ENCODE measurements at regions of chr6 and their contacts with region 1.

Region 1: DNA sequence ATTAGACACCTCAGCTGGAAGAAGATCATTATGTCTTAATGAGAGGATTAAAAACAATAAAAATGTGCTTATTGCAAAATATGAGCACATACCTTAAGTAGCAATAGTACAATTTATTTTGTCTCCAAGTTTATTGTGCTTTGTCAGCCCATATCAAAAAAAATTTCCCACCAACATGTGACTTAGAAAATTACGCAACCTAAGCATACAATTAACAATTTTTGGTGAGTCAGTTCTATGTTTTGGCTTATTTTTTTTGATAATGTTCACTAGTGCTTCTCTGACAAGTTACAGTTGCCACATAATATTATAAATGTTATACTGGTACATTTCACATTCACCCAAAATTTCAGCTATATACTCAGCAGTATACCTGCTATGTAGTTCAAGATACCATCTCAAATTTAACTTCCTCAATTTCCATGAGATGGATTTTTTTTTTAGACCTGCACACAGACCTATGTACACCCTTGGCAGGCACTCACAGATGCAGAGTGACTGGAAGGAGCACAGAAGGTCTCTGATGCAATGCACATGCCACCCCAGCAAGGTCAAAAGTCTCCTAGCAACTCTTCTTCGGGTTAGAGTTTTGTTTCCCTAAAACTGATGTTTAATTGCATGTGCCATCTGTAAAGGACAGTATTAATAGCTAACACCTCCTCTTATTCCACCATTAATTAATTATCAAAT is 112.4 kb downstream of the PRKN start:
- DNase-seq: no peak
- ATAC-seq: no peak
- H3K4me3 ChIP-seq: no peak overlapping the region
- H3K27ac ChIP-seq: no peak overlapping the region
- H3K4me1 ChIP-seq: no peaks in the 10 kb centered on the region
- H3K27me3 ChIP-seq: no peaks in the 10 kb centered on the region
- CTCF ChIP-seq: no peak
- POLR2A ChIP-seq: no peak
- RAD21 ChIP-seq: no peak

Region 2: DNA sequence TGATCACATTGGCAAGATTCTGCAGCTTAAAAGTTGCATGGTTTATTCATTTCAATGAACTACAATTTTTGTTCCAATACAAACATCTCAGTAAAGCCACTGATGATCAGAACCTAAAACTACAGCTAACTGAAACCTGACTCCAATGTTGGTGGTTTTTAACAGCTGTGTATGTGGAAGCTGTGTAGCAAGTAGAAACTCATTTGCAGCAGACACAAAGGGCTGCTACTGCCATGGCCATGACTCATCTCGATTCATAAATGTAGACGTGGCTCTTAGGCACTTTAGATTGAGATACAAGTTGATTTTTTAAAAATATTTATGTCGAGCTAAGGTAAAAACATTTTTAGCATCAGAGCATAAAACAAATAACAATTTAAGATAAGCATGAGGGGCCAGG is 1643.0 kb before region 1 on chr6:
- CTCF ChIA-PET with region 1: interaction called, 10 read pairs
- POLR2A ChIA-PET with region 1: no interaction called
- dilution Hi-C with region 1: no loop called
- in situ Hi-C with region 1: no loop called
- intact Hi-C with region 1: no loop called
- DNase-seq: peak; percentile 97
- ATAC-seq: peak; percentile 62
- H3K4me3 ChIP-seq: no peak overlapping the region
- H3K27ac ChIP-seq: peak overlapping the region; percentile 72; the same call in 1 of the 2 replicates
- H3K4me1 ChIP-seq: peaks cover 25% of the 10 kb centered on the region
- H3K27me3 ChIP-seq: peaks cover 1% of the 10 kb centered on the region; the same call in 1 of the 2 replicates
- CTCF ChIP-seq: no peak
- POLR2A ChIP-seq: no peak
- RAD21 ChIP-seq: no peak

Measured in IMR-90 (cell line).